GM13976 (cell line): ENCODE measurements at regions of chr10 and their contacts with region 1.

Region 1: GRCh38 chr10:77111611-77112550 is 525.7 kb downstream of the KCNMA1 start:
- DNase-seq: peak; percentile 53
- CTCF ChIP-seq: peak; percentile 65

Region 2: GRCh38 chr10:76558586-76558985 is 553.3 kb before region 1 on chr10:
- in situ Hi-C with region 1: loop called (anchors 25 kb)
- DNase-seq: no peak
- CTCF ChIP-seq: no peak

Region 3: DNA sequence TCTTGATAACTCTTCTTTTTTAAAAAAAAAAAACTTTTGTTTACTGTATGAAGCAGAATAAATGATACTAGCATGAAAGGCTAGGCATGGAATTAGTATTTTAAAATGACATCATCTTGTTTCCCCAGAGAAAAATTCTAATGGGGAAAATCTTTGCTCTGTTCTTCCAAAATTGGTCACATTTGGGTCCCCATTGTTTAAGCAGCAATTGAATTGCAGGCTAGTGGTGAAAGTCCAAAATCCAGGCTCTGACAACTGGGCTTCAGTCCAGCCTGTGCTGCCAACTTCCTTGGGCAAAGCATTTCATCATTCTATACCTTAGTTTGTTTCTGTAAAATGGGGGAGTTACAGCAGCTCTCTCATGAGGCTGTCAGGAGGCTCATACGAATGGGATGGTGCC is 200.7 kb before region 1 on chr10:
- in situ Hi-C with region 1: no loop called
- DNase-seq: no peak
- CTCF ChIP-seq: no peak